ENCODE measurements at regions of chr4 and their contacts with region 1.

Region 1: GRCh38 chr4:108560616-108561015 is 59.8 kb upstream of the RPL34 start:
- DNase-seq: no peak
- ATAC-seq: peak; percentile 31 to 83 (median 60)
- H3K4me3 ChIP-seq: no peak overlapping the region
- H3K27ac ChIP-seq: no peak overlapping the region
- H3K4me1 ChIP-seq: no peaks in the 10 kb centered on the region
- H3K27me3 ChIP-seq: no peaks in the 10 kb centered on the region
- CTCF ChIP-seq: no peak
- POLR2A ChIP-seq: no peak

Region 2: GRCh38 chr4:108029731-108030130 is 530.9 kb before region 1 on chr4:
- intact Hi-C with region 1: loop called in 1 of 2 experiments (anchors 10 kb)
- DNase-seq: no peak
- ATAC-seq: peak in 1 of 4 donors; percentile 19
- H3K4me3 ChIP-seq: no peak overlapping the region
- H3K27ac ChIP-seq: no peak overlapping the region
- H3K4me1 ChIP-seq: no peaks in the 10 kb centered on the region
- H3K27me3 ChIP-seq: no peaks in the 10 kb centered on the region
- CTCF ChIP-seq: no peak
- POLR2A ChIP-seq: no peak

Region 3: DNA sequence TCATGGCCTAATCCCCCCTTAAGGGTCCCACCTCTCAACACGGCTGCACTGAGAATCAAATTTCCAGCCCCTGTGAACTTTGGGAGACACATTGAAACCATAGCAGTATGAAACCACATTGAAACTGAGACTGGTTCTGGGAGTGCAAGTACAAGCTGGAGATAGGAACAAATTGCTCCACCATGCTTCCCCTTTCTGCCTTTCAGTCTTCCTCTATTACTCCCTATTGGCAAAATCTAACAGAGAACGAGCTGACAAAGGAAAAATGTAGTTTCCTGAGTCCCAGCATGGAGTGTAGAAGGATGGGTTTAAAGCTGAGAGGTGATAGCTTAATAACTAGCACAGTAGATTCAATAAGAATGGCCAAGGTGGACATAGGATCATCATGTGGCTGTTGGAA is 101.9 kb before region 1 on chr4:
- intact Hi-C with region 1: no loop called
- DNase-seq: no peak
- ATAC-seq: peak in 1 of 4 donors; percentile 27
- H3K4me3 ChIP-seq: no peak overlapping the region
- H3K27ac ChIP-seq: no peak overlapping the region
- H3K4me1 ChIP-seq: no peaks in the 10 kb centered on the region
- H3K27me3 ChIP-seq: no peaks in the 10 kb centered on the region
- CTCF ChIP-seq: no peak
- POLR2A ChIP-seq: no peak